Mammary epithelial cell (primary cell): ENCODE measurements at regions of chr6 and their contacts with region 1.

Region 1: GRCh38 chr6:24547243-24547642 is 52.5 kb downstream of the ALDH5A1 start:
- DNase-seq: no peak
- H3K4me3 ChIP-seq: no peak overlapping the region
- H3K27ac ChIP-seq: no peak overlapping the region
- H3K4me1 ChIP-seq: no peaks in the 10 kb centered on the region
- H3K27me3 ChIP-seq: no peaks in the 10 kb centered on the region
- CTCF ChIP-seq: no peak

Region 2: DNA sequence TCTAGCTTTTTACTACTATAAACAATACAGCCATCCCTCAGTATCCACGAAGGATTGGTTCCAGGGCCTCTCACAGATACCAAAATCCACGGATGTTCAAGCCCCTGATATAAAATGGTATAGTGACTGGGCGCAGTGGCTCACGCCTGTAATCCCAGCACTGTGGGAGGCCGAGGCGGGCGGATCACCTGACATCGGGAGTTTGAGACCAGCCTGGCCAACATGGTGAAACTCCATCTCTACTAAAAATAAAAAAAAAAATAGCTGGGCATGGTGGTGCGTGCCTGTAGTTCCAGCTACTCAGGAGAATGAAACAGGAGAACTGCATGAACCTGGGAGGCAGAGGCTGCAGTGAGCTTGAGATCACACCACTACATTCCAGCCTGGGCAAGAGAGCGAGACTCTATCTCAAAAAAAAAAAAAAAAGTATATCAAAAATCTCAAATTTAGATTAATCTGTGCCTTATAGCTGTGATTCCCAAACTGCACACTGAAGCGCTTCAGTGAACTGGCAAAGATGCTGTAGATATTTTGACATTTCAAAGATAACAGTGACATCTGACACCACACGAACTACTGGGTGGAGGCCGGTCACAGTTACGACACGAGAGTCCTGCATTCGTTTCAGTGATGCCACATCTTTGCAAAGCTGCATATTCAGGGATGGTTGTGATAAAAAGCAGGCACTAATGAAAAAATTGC is 106.2 kb before region 1 on chr6:
- CTCF ChIA-PET with region 1: no interaction called
- dilution Hi-C with region 1: loop called (anchors 10 kb)
- in situ Hi-C with region 1: no loop called
- intact Hi-C with region 1: no loop called
- DNase-seq: no peak
- H3K4me3 ChIP-seq: no peak overlapping the region
- H3K27ac ChIP-seq: no peak overlapping the region
- H3K4me1 ChIP-seq: no peaks in the 10 kb centered on the region
- H3K27me3 ChIP-seq: peaks cover 2% of the 10 kb centered on the region
- CTCF ChIP-seq: no peak